Dorsolateral prefrontal cortex (tissue), 120 donors: ENCODE measurements at regions of chr12 and their contacts with region 1.

Region 1: GRCh38 chr12:106774005-106774807 is at the start of gene RIC8B:
- DNase-seq: peak; percentile 94 to 98 (median 96)
- H3K4me3 ChIP-seq: peak within 1 kb of the TSS; percentile 53 to 99 (median 94)
- H3K27ac ChIP-seq: peak within 1 kb of the TSS; percentile 63 to 99 (median 97)
- H3K27me3 ChIP-seq: no peaks in the 10 kb centered on the region
- CTCF ChIP-seq: peak in 39 of 56 donors; percentile 4 to 58 (median 29)
- total RNA-seq, gene RIC8B: 21.0 to 54.9 (median 36.6) TPM

Region 2: GRCh38 chr12:106357549-106358395 is 416.4 kb before region 1 on chr12 and contains the start of gene POLR3B:
- intact Hi-C with region 1: loop called in 1 of 2 experiments (anchors 2 kb)
- DNase-seq: peak; percentile 92 to 96 (median 94)
- H3K4me3 ChIP-seq: peak within 1 kb of the TSS; percentile 39 to 96 (median 82)
- H3K27ac ChIP-seq: peak within 1 kb of the TSS; percentile 83 to 100 (median 99)
- H3K27me3 ChIP-seq: no peaks in the 10 kb centered on the region
- CTCF ChIP-seq: peak; percentile 81 to 98 (median 93)
- total RNA-seq, gene POLR3B: 7.5 to 25.1 (median 12.6) TPM

Region 3: GRCh38 chr12:106645074-106645421 is 129.2 kb before region 1 on chr12:
- intact Hi-C with region 1: loop called (anchors 2 kb)
- DNase-seq: peak; percentile 23 to 89 (median 84)
- H3K4me3 ChIP-seq: peak overlapping the region in 38 of 59 donors; percentile 1 to 54 (median 26)
- H3K27ac ChIP-seq: peak overlapping the region in 58 of 59 donors; percentile 3 to 95 (median 83)
- H3K27me3 ChIP-seq: no peaks in the 10 kb centered on the region
- CTCF ChIP-seq: peak in 2 of 56 donors; percentile 7 to 24

Region 4: GRCh38 chr12:106955377-106956047 is 181.3 kb after region 1 on chr12 and contains the start of gene TMEM263:
- intact Hi-C with region 1: loop called in 1 of 2 experiments (anchors 10 kb)
- DNase-seq: peak; percentile 74 to 94 (median 86)
- H3K4me3 ChIP-seq: peak within 1 kb of the TSS; percentile 67 to 98 (median 91)
- H3K27ac ChIP-seq: peak within 1 kb of the TSS; percentile 4 to 98 (median 93)
- H3K27me3 ChIP-seq: no peaks in the 10 kb centered on the region
- CTCF ChIP-seq: peak in 22 of 56 donors; percentile 1 to 55 (median 24)
- total RNA-seq, gene TMEM263: 16.7 to 37.0 (median 26.8) TPM

Region 5: GRCh38 chr12:107093417-107094182 is 319.4 kb after region 1 on chr12 and contains the start of gene CRY1:
- intact Hi-C with region 1: loop called (anchors 5 to 10 kb)
- DNase-seq: peak; percentile 92 to 98 (median 94)
- H3K4me3 ChIP-seq: peak within 1 kb of the TSS; percentile 70 to 100 (median 96)
- H3K27ac ChIP-seq: peak within 1 kb of the TSS; percentile 76 to 99 (median 96)
- H3K27me3 ChIP-seq: no peaks in the 10 kb centered on the region
- CTCF ChIP-seq: peak in 19 of 56 donors; percentile 7 to 43 (median 22)
- total RNA-seq, gene CRY1: 11.9 to 34.9 (median 18.1) TPM

Region 6: DNA sequence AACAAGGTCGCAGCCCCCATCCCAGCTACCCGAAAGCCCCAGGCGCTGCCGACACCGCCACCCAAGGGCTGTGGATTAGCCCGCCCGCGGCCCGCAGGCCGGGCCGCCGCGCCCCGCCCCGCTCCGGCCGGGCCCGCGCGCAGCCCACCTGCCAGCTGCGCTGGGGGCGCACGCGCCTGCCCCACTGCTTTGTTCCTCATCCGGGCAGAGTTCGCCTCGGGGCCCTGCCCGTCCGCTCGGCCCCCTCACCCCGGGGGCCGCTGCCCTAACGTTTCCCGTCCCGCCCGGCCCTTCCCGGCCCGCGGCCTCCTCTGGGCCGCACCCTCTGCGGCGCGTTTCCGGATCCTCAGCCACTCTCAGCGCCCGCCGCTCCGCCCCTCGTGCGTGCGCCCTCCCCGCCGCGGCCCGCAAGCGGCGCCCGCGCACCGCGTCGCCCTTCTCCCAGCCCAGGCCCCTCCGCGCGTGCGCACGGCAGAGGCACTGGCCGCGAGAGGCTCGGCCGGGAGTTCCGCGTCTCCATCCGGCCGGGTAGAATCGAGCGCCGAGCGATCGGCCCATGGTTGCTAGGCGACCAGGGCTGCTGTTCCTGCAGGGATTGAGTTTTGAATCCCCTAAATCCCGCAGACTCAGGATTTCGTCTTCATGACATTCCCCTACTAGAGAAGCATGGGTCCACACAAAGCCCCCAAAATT is 986.7 kb after region 1 on chr12 and contains the start of gene PRDM4:
- intact Hi-C with region 1: loop called in 1 of 2 experiments (anchors 10 kb)
- DNase-seq: peak; percentile 82 to 96 (median 92)
- H3K4me3 ChIP-seq: peak within 1 kb of the TSS; percentile 68 to 96 (median 85)
- H3K27ac ChIP-seq: peak within 1 kb of the TSS in 55 of 59 donors; percentile 2 to 88 (median 72)
- H3K27me3 ChIP-seq: no peaks in the 10 kb centered on the region
- CTCF ChIP-seq: peak in 53 of 56 donors; percentile 6 to 84 (median 50)
- total RNA-seq, gene PRDM4: 21.5 to 45.7 (median 32.4) TPM